Transverse colon (tissue), 4 donors: ENCODE measurements at regions of chr2 and their contacts with region 1.

Region 1: GRCh38 chr2:70855667-70856066 is 20.1 kb upstream of the CD207 start:
- DNase-seq: no peak
- H3K4me3 ChIP-seq: no peak overlapping the region
- H3K27ac ChIP-seq: no peak overlapping the region
- H3K4me1 ChIP-seq: no peaks in the 10 kb centered on the region
- H3K27me3 ChIP-seq: peaks cover 28% of the 10 kb centered on the region
- CTCF ChIP-seq: no peak
- EP300 ChIP-seq: no peak
- POLR2A ChIP-seq: no peak

Region 2: GRCh38 chr2:68994864-68995263 is 1860.8 kb before region 1 on chr2:
- in situ Hi-C with region 1: no loop called
- intact Hi-C with region 1: loop called (anchors 5 kb)
- DNase-seq: no peak
- H3K4me3 ChIP-seq: no peak overlapping the region
- H3K27ac ChIP-seq: no peak overlapping the region
- H3K4me1 ChIP-seq: no peaks in the 10 kb centered on the region
- H3K27me3 ChIP-seq: no peaks in the 10 kb centered on the region
- CTCF ChIP-seq: no peak
- EP300 ChIP-seq: no peak
- POLR2A ChIP-seq: no peak

Region 3: DNA sequence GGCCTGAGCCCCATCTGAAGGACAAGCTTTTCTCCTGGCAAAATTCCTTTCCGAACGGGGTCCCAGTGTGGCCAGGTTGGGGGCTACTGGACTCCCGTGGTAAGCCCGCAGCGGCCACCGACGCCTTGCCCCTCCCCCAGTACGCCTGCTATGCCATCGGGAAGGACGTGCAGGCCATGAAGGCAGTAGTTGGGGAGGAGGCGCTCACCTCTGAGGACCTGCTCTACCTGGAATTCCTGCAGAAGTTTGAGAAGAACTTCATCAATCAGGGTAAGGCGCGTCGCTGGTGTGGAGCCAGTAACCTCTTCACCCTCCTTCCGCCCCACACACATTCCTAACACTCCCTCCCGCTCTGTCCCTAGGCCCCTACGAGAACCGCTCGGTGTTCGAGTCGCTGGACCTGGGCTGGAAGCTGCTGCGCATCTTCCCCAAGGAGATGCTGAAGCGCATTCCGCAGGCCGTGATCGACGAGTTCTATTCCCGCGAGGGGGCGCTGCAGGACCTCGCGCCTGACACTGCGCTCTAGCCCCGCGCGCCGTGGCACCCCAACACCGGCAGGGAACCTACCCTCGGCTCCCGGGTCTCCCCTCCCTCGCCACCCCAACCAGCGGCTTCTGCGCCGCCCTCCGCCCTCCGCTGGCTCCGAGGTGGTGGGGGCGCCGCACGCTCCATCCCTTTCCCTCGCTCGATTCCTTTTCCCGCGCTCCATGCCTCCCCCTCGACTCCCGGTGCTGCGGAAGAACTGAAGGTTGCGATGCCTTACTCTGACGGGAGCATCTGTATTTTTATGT is 109.1 kb after region 1 on chr2:
- in situ Hi-C with region 1: no loop called
- intact Hi-C with region 1: no loop called
- DNase-seq: peak; percentile 83
- H3K4me3 ChIP-seq: peak overlapping the region; percentile 26 to 50 (median 32)
- H3K27ac ChIP-seq: no peak overlapping the region
- H3K4me1 ChIP-seq: peaks cover 0 to 5% (median 2%) of the 10 kb centered on the region in 4 donors
- H3K27me3 ChIP-seq: peaks cover 33% of the 10 kb centered on the region
- CTCF ChIP-seq: peak; percentile 58 to 83 (median 80)
- EP300 ChIP-seq: no peak
- POLR2A ChIP-seq: no peak